MCF 10A (cell line): ENCODE measurements at regions of chr12 and their contacts with region 1.

Region 1: DNA sequence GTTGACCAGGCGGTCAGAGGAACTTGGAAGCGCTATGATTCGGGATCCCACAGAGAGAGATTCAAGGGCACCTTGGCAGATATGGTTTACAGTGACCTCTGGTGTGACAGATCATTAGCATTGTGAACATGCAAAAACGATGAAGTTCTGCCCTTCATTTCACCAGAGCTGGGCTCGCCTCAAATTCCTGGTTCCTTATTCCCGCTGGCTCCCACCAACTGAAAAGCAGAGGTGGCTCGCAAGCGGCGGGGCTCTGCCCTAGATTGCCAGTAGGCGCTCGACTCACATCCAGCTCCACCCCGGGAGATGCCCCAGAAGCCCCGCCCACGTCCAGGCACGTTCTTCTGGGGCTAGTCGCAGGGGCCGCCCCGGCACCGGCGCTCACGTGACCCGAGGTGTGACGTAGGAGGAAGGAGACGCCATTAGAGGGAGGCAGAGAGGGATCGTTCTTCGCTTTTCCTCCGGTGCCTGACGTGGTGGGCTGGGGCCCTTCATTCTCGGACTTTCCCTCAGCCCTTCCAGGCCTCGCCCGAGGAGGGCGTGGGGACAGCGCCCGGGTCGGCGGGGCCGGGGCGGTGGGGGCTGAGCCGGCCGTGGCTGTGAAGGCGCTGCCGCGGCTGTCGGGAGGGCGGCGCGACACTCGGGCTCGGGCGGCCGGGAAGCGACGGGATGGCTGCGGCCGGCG is at the start of gene RAB21:
- DNase-seq: peak; percentile 98
- H3K4me3 Mint-ChIP-seq: peak within 1 kb of the TSS; percentile 86
- H3K27ac Mint-ChIP-seq: peak within 1 kb of the TSS; percentile 89
- H3K4me1 Mint-ChIP-seq: no peaks in the 10 kb centered on the region
- H3K27me3 Mint-ChIP-seq: peaks cover 23% of the 10 kb centered on the region
- CTCF ChIP-seq: no peak
- total RNA-seq, gene RAB21: 86.4 and 88.0 TPM in 2 replicates

Region 2: DNA sequence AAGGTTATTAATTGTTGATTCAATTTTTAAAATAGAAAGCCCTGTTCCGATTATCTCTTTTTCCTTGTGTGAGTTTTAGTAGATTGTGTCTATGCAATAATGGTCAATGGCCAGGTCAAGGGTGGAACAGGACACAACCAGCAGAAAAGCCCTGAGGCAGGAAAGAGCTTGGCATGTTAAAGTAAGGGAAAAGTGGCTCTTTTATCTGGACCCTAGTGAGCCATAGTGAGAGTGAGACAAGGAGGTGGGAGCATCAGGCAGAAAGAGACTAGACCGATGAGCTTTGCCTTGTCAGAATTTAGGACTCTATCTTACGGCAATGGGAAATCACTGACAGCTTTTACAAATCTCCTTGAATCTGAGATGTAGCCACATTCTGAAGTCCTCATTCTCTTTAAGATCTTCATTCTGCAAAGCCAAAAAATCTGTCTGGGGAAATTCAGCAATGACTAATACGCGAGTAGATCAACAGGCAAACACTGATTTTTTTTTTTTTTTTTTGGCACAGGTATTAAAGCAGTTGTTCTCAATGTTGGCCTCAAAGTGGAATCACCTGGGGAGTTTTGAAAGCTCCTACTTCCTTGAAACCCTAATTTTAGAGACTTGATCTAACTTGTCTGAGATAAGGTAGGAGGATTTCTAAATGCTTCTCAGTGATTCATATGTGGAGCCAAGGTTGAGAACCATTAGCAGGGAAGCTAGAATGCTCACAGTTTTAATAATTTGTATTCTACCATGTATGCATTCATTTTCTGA is 34.8 kb before region 1 on chr12:
- CTCF ChIA-PET with region 1: no interaction called
- POLR2A ChIA-PET with region 1: interaction called, 15 read pairs
- intact Hi-C with region 1: no loop called
- DNase-seq: peak; percentile 92
- H3K4me3 Mint-ChIP-seq: no peak overlapping the region
- H3K27ac Mint-ChIP-seq: peak overlapping the region; percentile 30
- H3K4me1 Mint-ChIP-seq: peaks cover 7% of the 10 kb centered on the region
- H3K27me3 Mint-ChIP-seq: no peaks in the 10 kb centered on the region
- CTCF ChIP-seq: no peak

Region 3: GRCh38 chr12:71766202-71766601 is 11.6 kb after region 1 on chr12:
- CTCF ChIA-PET with region 1: interaction called, 7 read pairs
- POLR2A ChIA-PET with region 1: interaction called, 14 read pairs
- intact Hi-C with region 1: no loop called
- DNase-seq: no peak
- H3K4me3 Mint-ChIP-seq: no peak overlapping the region
- H3K27ac Mint-ChIP-seq: no peak overlapping the region
- H3K4me1 Mint-ChIP-seq: peaks cover 19% of the 10 kb centered on the region
- H3K27me3 Mint-ChIP-seq: no peaks in the 10 kb centered on the region
- CTCF ChIP-seq: no peak

Region 4: GRCh38 chr12:71790331-71790730 is 35.7 kb after region 1 on chr12:
- CTCF ChIA-PET with region 1: no interaction called
- POLR2A ChIA-PET with region 1: no interaction called
- intact Hi-C with region 1: no loop called
- DNase-seq: no peak
- H3K4me3 Mint-ChIP-seq: no peak overlapping the region
- H3K27ac Mint-ChIP-seq: no peak overlapping the region
- H3K4me1 Mint-ChIP-seq: no peaks in the 10 kb centered on the region
- H3K27me3 Mint-ChIP-seq: no peaks in the 10 kb centered on the region
- CTCF ChIP-seq: no peak

Region 5: GRCh38 chr12:71840231-71840847 is 85.7 kb after region 1 on chr12:
- CTCF ChIA-PET with region 1: interaction called, 3 read pairs
- POLR2A ChIA-PET with region 1: interaction called, 38 read pairs
- intact Hi-C with region 1: no loop called
- DNase-seq: peak; percentile 76
- H3K4me3 Mint-ChIP-seq: peak overlapping the region; percentile 94
- H3K27ac Mint-ChIP-seq: peak overlapping the region; percentile 100
- H3K4me1 Mint-ChIP-seq: peaks cover 14% of the 10 kb centered on the region
- H3K27me3 Mint-ChIP-seq: no peaks in the 10 kb centered on the region
- CTCF ChIP-seq: no peak

Region 6: GRCh38 chr12:71871116-71871515 is 116.5 kb after region 1 on chr12:
- CTCF ChIA-PET with region 1: no interaction called
- POLR2A ChIA-PET with region 1: no interaction called
- intact Hi-C with region 1: no loop called
- DNase-seq: peak; percentile 40
- H3K4me3 Mint-ChIP-seq: no peak overlapping the region
- H3K27ac Mint-ChIP-seq: peak overlapping the region; percentile 77
- H3K4me1 Mint-ChIP-seq: peaks cover 15% of the 10 kb centered on the region
- H3K27me3 Mint-ChIP-seq: no peaks in the 10 kb centered on the region
- CTCF ChIP-seq: no peak